ENCODE measurements at regions of chr19 and their contacts with region 1.

Region 1: DNA sequence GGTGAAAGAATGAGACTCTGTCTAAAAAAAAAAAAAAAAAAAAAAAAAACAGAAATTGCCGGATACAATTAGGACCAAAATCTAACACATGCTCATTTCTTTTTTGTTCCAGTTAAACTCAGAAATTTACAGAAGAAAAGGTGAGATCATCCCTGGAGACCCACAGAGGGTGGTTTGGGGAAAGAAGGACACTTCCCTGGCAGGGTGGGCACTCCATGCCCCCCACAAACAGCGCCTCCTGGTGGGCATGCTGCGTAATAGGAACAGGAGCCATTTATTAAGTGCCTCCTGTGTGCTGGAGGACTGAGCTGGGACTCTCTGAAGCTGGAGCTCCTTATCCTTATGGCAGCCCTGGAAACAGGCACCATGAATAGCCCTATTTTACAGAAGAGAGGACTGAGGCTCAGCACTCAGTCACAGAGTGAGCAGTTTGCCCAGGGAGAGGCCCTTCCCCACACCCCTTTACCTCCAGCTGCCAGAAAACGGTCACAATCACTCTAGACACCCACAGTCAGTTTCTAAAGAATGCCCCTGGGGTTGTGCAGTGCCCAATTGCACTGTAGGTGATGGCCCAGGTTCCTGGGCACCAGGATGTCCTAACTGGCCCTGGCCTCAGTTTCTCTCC is 10.1 kb downstream of the C19orf38 start:
- DNase-seq: peak in 1 of 2 experiments; percentile 78
- H3K4me3 ChIP-seq: no peak overlapping the region
- H3K27ac ChIP-seq: no peak overlapping the region
- H3K4me1 ChIP-seq: no peaks in the 10 kb centered on the region
- H3K27me3 ChIP-seq: no peaks in the 10 kb centered on the region; a peak in 1 of 7 replicates
- CTCF ChIP-seq: peak; percentile 83 to 98 (median 93)
- EP300 ChIP-seq: no peak
- POLR2A ChIP-seq: no peak
- RAD21 ChIP-seq: peak; percentile 57 to 62

Region 2: GRCh38 chr19:10828981-10829821 is 29.1 kb before region 1 on chr19:
- CTCF ChIA-PET with region 1: interaction called, 22 read pairs
- POLR2A ChIA-PET with region 1: interaction called, 22 read pairs
- DNase-seq: no peak
- H3K4me3 ChIP-seq: no peak overlapping the region
- H3K27ac ChIP-seq: 0 out of 2 replicates have a peak overlapping the region, but pooled peaks have one; percentile 51
- H3K4me1 ChIP-seq: no peaks in the 10 kb centered on the region
- H3K27me3 ChIP-seq: no peaks in the 10 kb centered on the region
- CTCF ChIP-seq: peak; percentile 35 to 73 (median 38)
- EP300 ChIP-seq: no peak
- POLR2A ChIP-seq: no peak
- RAD21 ChIP-seq: peak in 1 of 2 experiments; percentile 18; a peak in 1 of 4 replicates

Region 3: DNA sequence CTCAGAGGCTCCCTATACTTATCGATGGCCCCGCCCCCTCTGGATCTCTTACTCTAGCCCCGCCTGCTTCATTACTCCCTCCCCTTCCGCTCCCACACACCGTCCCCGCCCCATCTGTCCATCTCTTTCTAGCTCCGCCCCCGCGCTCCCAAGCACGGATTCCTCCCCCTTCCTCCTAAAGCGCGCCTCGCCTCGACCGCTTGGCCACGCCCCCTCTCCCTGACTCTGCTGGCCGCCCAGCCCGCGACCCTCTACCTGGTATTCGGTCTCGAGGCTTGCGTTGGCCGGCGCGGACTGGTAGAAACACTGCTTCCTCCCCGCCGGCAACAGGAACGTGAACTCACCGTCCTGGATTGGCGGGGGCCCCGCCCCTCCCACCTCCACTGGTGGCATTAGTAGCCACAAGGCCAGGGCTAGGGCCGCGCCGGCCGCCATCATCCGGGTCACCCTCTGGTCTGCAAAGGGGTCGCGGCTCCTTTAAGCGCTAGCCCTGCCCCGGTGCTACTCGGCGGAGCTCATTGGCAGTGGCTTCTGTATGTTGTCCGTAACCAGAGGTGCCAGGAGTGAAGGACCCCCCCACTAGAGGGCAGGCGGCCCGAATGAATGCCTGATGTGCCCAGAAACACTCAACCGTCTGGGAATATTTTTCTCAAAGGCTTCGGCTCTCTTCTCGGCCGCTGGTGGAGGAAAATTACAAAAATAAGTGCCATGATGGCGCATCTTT is 22.4 kb before region 1 on chr19 and contains the start of gene TMED1:
- CTCF ChIA-PET with region 1: interaction called, 249 read pairs
- POLR2A ChIA-PET with region 1: interaction called, 22 read pairs
- DNase-seq: peak; percentile 99 to 100
- H3K4me3 ChIP-seq: peak within 1 kb of the TSS; percentile 58 to 92 (median 76)
- H3K27ac ChIP-seq: peak within 1 kb of the TSS; percentile 97
- H3K4me1 ChIP-seq: peaks cover 3 to 10% (median 6%) of the 10 kb centered on the region in 4 experiments
- H3K27me3 ChIP-seq: peaks cover 0 to 4% (median 0%) of the 10 kb centered on the region in 4 experiments; a peak in 1 of 7 replicates
- CTCF ChIP-seq: no peak
- EP300 ChIP-seq: no peak
- POLR2A ChIP-seq: peak; percentile 55 to 94
- RAD21 ChIP-seq: no peak
- total RNA-seq, gene TMED1: 26.2 and 26.9 TPM in 2 replicates

Region 4: DNA sequence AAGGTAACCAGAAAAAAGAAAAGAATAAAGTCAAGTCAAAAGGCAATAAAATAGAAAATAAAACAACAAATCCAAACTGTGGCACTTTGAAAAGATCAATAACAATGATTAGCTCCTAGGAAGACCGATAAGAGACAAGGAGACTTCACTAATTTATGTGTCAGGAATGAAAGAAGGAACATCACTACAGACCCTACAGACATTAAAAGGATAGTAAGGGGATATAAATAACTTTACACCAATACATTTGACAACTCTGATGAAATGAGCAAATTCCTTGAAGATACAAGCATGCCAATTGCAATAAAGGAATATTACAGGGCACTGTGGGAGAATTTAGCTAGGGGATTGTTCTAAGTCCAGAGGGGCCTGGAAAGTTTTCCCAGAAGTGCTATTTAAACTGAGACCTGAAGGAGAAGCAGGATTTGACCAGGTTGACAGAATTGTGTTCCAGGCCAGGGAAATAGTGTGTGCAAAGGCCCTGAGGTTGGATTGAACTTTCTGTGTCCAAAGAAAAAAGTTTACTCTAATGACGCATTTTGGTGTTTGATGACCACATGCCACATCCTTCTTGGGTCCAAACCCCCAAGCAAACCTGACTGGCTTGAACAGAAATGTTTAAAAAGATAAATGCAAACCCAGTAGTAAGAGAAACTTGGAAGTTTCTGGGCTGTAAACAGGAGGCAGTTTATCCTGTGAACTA is 11.7 kb before region 1 on chr19:
- CTCF ChIA-PET with region 1: interaction called, 249 read pairs
- POLR2A ChIA-PET with region 1: interaction called, 5 read pairs
- DNase-seq: no peak
- H3K4me3 ChIP-seq: no peak overlapping the region
- H3K27ac ChIP-seq: no peak overlapping the region
- H3K4me1 ChIP-seq: no peaks in the 10 kb centered on the region
- H3K27me3 ChIP-seq: no peaks in the 10 kb centered on the region
- CTCF ChIP-seq: no peak
- EP300 ChIP-seq: no peak
- POLR2A ChIP-seq: no peak
- RAD21 ChIP-seq: no peak

Region 5: GRCh38 chr19:10870955-10871603 is 12.8 kb after region 1 on chr19 and contains the start of gene CARM1:
- CTCF ChIA-PET with region 1: interaction called, 249 read pairs
- POLR2A ChIA-PET with region 1: interaction called, 3 read pairs
- DNase-seq: peak in 1 of 2 experiments; percentile 99
- H3K4me3 ChIP-seq: peak within 1 kb of the TSS; percentile 65 to 94 (median 76)
- H3K27ac ChIP-seq: peak within 1 kb of the TSS; percentile 86
- H3K4me1 ChIP-seq: peaks cover 0 to 12% (median 2%) of the 10 kb centered on the region in 4 experiments; a peak in 5 of 7 replicates
- H3K27me3 ChIP-seq: no peaks in the 10 kb centered on the region
- CTCF ChIP-seq: peak; percentile 72 to 97 (median 95)
- EP300 ChIP-seq: peak in 1 of 2 experiments; percentile 46; a peak in 1 of 3 replicates
- POLR2A ChIP-seq: no peak
- RAD21 ChIP-seq: peak; percentile 37 to 70; a peak in 3 of 4 replicates
- total RNA-seq, gene CARM1: 134 and 136 TPM in 2 replicates

Region 6: GRCh38 chr19:10876459-10877240 is 18.3 kb after region 1 on chr19:
- CTCF ChIA-PET with region 1: interaction called, 34 read pairs
- POLR2A ChIA-PET with region 1: interaction called, 3 read pairs
- DNase-seq: no peak
- H3K4me3 ChIP-seq: no peak overlapping the region
- H3K27ac ChIP-seq: peak overlapping the region; percentile 58; the same call in 1 of the 2 replicates
- H3K4me1 ChIP-seq: peaks cover 11 to 31% (median 18%) of the 10 kb centered on the region in 4 experiments
- H3K27me3 ChIP-seq: no peaks in the 10 kb centered on the region
- CTCF ChIP-seq: no peak
- EP300 ChIP-seq: no peak
- POLR2A ChIP-seq: no peak
- RAD21 ChIP-seq: no peak

Measured in H1 (cell line).